Activated naive CD4-positive, alpha-beta T cell treated with anti-CD3 and anti-CD28 coated beads for 36 hours (primary cell): ENCODE measurements at regions of chr2 and their contacts with region 1.

Region 1: DNA sequence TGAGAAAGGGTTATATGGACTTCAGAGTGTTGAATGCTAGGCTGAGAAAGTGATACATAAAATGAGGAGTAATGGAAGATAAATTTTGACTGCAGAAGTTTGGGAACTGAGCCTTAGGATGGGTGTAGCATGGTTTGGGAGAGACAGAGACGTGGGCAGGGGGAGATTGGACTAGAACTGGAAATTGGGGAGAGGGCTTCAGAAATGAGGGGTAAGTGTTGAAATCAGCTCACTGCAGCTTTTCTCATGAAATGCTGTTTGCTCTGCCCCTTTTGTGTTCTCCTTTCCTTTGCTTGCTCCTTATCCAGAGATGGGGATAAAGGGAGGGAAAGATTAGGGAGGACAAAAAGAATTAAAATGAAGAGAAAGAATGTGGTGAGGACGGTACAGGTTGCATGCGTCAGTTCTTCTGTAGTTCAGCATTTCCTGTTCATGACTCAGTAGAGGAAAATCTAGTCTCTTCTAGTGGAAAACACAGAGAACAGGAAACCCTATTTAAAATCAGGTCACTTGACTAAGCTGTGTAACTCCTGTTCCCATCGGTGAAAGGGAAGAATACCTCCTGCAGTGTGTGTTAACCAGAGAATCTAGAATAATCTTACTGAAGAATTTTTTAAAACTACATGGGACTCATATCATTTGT is 105.6 kb downstream of the CRIM1 start:
- DNase-seq: no peak
- H3K4me3 Mint-ChIP-seq: no peak overlapping the region
- H3K27ac Mint-ChIP-seq: no peak overlapping the region
- H3K4me1 Mint-ChIP-seq: no peaks in the 10 kb centered on the region
- H3K27me3 Mint-ChIP-seq: no peaks in the 10 kb centered on the region

Region 2: DNA sequence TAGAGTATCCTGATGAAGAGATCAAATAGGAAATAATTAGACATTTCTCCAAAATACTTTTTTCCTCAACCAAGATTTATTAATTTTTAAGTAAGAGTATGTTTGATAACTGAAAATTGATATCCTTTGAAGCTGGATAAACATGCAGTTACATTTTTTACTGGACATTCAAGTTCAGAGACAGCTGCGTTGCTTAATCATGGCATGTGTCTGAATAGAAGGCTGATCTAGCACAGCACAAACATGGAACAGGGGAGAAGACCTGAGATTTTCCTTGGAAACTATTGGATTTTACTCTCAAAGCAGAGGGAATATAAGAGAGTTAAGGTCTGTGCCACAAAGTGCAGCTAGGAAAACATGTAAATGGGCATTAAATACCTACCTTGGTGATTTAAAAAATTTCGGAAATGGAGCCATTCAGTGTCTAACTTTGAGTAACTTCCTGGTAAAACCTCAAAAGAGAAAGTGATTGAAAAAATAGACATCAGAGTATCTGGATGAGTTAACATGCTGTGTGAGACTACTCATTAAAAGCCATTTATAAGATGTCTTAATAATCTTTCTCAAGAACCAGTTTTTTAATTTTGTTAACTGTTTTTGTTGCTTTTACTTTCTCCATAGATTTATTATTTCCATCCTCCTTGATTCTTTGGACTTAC is 73.8 kb before region 1 on chr2:
- CTCF ChIA-PET with region 1: no interaction called
- intact Hi-C with region 1: loop called (anchors 1 kb)
- DNase-seq: no peak
- H3K4me3 Mint-ChIP-seq: no peak overlapping the region
- H3K27ac Mint-ChIP-seq: no peak overlapping the region
- H3K4me1 Mint-ChIP-seq: peaks cover 9% of the 10 kb centered on the region
- H3K27me3 Mint-ChIP-seq: no peaks in the 10 kb centered on the region

Region 3: GRCh38 chr2:36478332-36478738 is 17.2 kb after region 1 on chr2:
- CTCF ChIA-PET with region 1: no interaction called
- intact Hi-C with region 1: no loop called
- DNase-seq: no peak
- H3K4me3 Mint-ChIP-seq: no peak overlapping the region
- H3K27ac Mint-ChIP-seq: no peak overlapping the region
- H3K4me1 Mint-ChIP-seq: no peaks in the 10 kb centered on the region
- H3K27me3 Mint-ChIP-seq: no peaks in the 10 kb centered on the region